ENCODE measurements at regions of chr16 and their contacts with region 1.

Region 1: DNA sequence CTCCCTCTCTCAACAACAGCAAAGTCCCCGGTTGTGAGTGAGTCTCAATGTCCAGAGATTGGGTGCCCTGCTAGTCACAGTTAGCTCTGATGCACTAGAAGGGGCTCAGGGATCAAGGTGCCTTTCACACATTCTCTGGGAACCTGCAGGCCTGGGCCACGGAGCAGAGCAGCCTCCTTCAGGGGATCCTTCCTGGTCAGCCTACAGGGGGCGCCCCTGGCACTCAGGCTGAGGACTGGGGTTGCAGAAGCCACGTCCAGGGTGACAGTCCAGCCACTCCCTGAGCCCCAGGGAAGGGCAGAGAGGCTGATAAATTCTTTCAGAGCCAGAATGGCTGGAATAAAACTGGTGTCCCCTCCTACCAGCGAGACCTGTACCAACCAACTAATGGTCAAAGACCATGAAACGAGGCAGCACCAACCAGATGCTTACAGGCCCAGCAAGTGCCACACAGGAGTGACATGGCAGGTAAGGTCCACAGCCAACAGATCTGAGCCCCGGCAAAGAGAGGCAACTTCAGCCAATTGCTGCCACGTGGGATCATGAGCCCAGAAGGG is 43.5 kb downstream of the ST3GAL2 start:
- DNase-seq: peak; percentile 87
- ATAC-seq: peak; percentile 77

Region 2: DNA sequence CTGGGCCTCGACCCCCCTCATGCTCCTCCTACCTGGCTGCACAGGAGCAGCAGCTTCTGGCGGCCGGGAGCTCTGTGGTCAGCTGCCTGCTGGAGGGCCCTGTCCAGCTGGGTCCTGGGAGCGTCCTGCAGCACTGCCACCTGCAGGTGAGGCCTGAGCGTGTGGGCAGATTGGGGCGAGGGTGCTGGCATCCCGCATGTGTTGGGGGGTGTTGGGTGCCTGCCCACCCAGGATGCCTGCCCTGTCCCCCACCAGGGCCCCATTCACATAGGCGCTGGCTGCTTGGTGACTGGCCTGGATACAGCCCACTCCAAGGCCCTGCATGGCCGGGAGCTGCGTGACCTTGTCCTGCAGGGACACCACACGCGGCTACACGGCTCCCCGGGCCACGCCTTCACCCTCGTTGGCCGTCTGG is 75.5 kb after region 1 on chr16:
- intact Hi-C with region 1: loop called (anchors 2 kb)
- DNase-seq: no peak
- ATAC-seq: peak; percentile 53

Region 3: DNA sequence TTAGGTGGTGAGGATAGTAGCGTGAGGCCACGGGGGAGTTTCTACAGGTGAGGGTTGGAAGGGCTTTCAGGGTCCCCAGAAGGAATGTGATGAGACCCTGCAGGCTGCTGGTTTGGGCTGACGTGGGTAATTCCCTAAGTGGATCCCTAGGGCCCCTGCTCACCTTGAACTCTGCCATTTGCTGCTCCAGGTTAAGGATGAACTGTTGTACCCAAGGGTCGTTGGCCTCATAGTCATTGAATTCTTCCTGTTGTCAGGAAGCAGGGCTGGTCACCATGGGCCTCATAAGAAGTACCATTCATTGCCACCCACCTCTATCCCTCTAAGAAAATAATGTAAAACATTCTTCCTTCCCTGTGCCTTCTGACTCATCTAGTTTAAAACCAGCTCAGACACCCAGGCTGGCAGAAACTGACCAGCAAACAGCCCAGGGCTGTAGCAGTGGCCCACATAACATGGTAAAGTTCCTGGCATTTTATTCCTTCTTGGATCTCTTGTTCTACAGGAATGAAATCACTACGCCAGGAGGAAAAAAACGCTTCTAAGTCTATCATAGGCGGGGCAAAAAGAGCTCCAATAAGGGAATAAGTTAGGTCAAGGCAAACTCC is 86.6 kb after region 1 on chr16:
- intact Hi-C with region 1: no loop called
- DNase-seq: no peak
- ATAC-seq: no peak

Region 4: GRCh38 chr16:71351558-71351901 is 956.1 kb after region 1 on chr16:
- intact Hi-C with region 1: no loop called
- DNase-seq: no peak
- ATAC-seq: no peak